ENCODE measurements at regions of chr19 and their contacts with region 1.

Region 1: GRCh38 chr19:39212375-39212742 is 8.3 kb upstream of the SYCN start:
- DNase-seq: peak in 1 of 2 experiments; percentile 40
- H3K4me3 ChIP-seq: no peak overlapping the region
- H3K27ac ChIP-seq: no peak overlapping the region
- H3K4me1 ChIP-seq: no peaks in the 10 kb centered on the region
- H3K27me3 ChIP-seq: no peaks in the 10 kb centered on the region
- CTCF ChIP-seq: peak; percentile 59

Region 2: DNA sequence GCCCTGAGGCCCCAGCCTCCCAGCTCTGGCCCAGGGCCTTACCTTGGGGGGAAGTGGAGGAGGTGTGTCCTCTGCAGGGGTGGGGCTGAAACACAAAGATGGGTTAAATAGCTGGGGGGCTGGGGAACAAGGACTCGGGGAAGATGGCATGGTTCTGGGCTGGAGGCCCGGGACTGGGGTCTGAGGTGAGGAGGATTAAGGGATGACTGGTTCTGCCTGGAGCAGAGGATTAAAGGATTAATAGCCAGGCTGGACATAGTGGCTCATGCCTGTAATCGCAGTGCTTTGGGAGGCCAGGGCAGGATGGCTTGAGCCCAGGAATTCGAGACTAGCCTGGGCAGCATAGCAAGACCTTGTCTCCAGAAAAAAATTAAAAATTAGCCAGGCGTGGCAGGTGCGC is 606.2 kb before region 1 on chr19:
- CTCF ChIA-PET with region 1: interaction called, 13 read pairs
- POLR2A ChIA-PET with region 1: no interaction called
- intact Hi-C with region 1: no loop called
- DNase-seq: no peak
- H3K4me3 ChIP-seq: no peak overlapping the region
- H3K27ac ChIP-seq: no peak overlapping the region
- H3K4me1 ChIP-seq: no peaks in the 10 kb centered on the region
- H3K27me3 ChIP-seq: no peaks in the 10 kb centered on the region
- CTCF ChIP-seq: no peak

Region 3: DNA sequence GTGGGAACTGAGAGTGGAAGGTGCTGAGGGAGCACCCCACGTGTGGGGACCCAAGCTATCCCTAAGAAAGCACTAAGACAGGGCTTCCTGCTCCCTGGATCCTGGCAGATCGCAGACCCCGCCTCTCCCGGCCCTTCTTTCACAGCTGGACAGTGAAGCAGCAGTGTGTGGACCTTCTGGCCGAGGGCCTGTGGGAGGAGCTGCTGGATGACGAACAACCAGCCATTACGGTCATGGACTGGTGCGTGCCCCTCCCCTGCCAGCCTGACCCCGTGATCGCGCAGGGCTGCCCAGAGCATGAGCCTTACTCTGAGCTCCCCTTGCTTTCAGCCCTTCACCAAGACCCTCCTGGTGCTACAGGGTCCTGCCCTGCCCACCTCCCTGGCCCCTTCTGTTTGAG is 13.3 kb before region 1 on chr19:
- CTCF ChIA-PET with region 1: no interaction called
- POLR2A ChIA-PET with region 1: no interaction called
- intact Hi-C with region 1: no loop called
- DNase-seq: no peak
- H3K4me3 ChIP-seq: no peak overlapping the region
- H3K27ac ChIP-seq: no peak overlapping the region
- H3K4me1 ChIP-seq: peaks cover 48% of the 10 kb centered on the region
- H3K27me3 ChIP-seq: no peaks in the 10 kb centered on the region
- CTCF ChIP-seq: no peak

Region 4: DNA sequence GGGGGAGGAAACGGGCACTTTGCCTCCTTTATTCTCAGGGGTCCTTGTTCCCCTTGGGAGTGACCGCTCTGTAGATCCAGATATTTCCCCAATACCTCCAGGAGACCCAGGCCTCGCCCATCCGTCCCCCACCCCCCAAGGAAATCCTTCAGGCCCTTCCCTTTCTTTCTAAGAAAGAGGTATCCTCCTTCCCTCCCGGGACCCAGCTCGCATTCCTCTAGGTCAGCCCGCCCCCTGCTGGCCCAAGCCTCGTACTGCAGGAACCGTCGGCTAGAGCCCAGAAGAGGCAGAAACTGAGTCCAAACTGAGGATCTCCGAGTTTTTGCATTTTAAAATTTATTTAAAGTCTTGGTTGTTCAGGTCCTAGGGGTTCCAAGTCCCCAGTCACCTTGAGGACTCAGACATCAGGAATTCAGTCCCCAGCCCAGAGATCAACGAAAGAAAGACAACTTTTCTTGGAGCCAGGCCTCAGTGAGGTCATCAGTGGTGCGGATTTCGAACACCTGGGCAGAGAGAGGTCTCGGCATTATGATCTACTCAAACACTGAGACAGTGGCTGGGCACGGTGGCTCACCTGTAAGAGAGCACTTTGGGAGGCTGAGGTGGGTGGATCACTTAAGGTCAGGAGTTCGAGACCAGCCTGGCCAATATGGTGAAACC is 115.8 kb after region 1 on chr19:
- CTCF ChIA-PET with region 1: no interaction called
- POLR2A ChIA-PET with region 1: no interaction called
- intact Hi-C with region 1: loop called (anchors 1 kb)
- DNase-seq: peak; percentile 38 to 81
- H3K4me3 ChIP-seq: no peak overlapping the region
- H3K27ac ChIP-seq: no peak overlapping the region
- H3K4me1 ChIP-seq: no peaks in the 10 kb centered on the region
- H3K27me3 ChIP-seq: no peaks in the 10 kb centered on the region
- CTCF ChIP-seq: peak; percentile 97

Region 5: GRCh38 chr19:39704181-39705044 is 492.1 kb after region 1 on chr19 and contains the start of gene LGALS14:
- CTCF ChIA-PET with region 1: no interaction called
- POLR2A ChIA-PET with region 1: no interaction called
- intact Hi-C with region 1: no loop called
- DNase-seq: no peak
- H3K4me3 ChIP-seq: no peak within 1 kb of the TSS
- H3K27ac ChIP-seq: no peak within 1 kb of the TSS
- H3K4me1 ChIP-seq: no peaks in the 10 kb centered on the region
- H3K27me3 ChIP-seq: peaks cover 68% of the 10 kb centered on the region
- CTCF ChIP-seq: no peak
- total RNA-seq, gene LGALS14: not detected in 2 replicates

Measured in PC-9 (cell line).